ENCODE measurements at regions of chr6 and their contacts with region 1.

Region 1: DNA sequence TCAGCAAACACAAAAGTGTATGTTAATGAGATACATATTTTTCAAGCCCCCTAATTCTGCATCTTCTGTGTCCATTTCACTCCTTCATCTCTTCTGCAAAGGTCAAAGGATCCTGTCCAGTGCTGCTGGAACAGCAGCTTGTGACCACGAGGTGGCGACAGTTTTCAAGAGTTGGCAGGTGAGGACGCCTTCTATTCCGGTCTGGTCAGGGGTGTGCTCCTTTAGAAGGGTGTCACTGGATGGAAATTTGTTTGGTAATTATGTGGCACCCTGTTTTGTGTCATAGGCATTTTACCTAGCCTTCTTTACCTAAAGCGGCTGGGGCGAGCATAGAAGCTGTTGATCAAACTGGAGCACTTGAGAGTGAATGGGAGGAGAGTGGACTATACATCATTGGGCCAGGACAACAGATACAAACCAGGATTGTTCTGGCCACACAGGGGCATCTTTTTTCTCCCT is 32.9 kb upstream of the ERVFRD-1 start:
- DNase-seq: peak; percentile 59 to 82
- H3K4me3 ChIP-seq: no peak overlapping the region
- H3K27ac ChIP-seq: no peak overlapping the region
- H3K4me1 ChIP-seq: no peaks in the 10 kb centered on the region
- H3K27me3 ChIP-seq: no peaks in the 10 kb centered on the region
- CTCF ChIP-seq: peak; percentile 84

Region 2: DNA sequence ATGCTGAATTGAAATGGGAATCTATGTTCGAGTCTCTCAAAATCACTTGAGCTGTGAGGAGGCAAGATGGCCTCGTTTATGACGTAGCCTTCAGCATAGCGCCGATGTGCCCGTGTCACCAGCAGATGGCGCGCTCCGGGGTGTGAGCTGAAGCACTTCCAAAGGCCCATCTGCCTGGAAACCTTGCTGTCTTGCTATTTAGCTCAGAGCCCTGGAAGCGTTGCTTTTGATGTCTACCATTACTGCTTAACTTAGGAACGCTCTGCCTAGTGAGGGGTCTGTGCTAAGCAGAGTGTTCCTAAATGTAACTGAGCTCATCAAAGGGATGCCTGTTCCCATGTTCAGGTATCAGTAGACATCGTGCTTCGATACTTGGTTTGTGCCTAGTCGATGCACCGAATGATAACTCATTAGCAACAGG is 189.8 kb before region 1 on chr6:
- CTCF ChIA-PET with region 1: no interaction called
- POLR2A ChIA-PET with region 1: no interaction called
- intact Hi-C with region 1: loop called (anchors 5 kb)
- DNase-seq: peak in 1 of 2 experiments; percentile 57
- H3K4me3 ChIP-seq: no peak overlapping the region
- H3K27ac ChIP-seq: no peak overlapping the region
- H3K4me1 ChIP-seq: no peaks in the 10 kb centered on the region
- H3K27me3 ChIP-seq: no peaks in the 10 kb centered on the region
- CTCF ChIP-seq: peak; percentile 46

Region 3: DNA sequence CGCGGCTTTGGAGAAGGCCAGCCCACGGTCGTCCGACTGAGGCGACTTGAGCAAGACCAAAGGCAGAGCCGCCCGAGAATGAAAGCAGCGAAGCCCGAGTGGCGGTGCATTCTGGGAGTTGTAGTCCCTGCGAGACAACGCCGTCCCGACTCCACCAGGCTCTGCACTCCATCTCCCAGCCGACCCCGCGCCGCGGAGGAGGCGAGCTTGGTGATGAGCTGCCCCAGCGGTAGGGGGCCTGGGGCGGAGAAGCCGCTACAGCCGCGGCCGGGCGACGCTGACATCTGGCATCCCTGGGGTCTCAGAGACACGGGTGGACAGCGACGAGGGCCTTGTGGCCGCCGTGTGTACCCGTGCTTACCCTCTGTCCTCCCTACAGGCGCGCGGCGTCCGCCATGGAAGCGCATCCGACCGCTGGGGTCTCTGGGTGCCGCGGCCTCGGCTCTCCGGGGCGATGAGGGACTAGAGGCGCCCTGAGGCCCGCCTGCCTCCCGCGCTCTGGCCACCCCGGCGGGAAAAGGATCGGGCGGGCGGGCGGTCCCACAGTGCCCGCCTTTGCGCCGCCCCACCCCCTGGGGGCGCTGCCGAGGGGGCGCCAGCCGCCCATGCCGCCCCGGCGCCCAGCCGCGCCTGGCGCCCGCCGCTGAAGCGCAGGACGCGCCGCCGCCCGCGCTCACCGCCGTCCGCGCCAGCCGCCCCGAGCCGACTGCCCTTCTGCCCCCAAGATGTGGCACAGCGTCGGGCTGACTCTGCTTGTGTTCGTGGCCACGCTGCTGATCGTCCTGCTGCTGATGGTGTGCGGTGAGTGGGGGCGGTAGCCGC is 50.6 kb before region 1 on chr6 and contains the start of gene SMIM13:
- CTCF ChIA-PET with region 1: interaction called, 3 read pairs
- POLR2A ChIA-PET with region 1: no interaction called
- intact Hi-C with region 1: loop called (anchors 1 kb)
- DNase-seq: peak; percentile 88 to 96
- H3K4me3 ChIP-seq: peak within 1 kb of the TSS; percentile 76
- H3K27ac ChIP-seq: peak within 1 kb of the TSS; percentile 64
- H3K4me1 ChIP-seq: 0 out of 2 replicates have a peak, but pooled peaks cover 8% of the 10 kb centered on the region
- H3K27me3 ChIP-seq: no peaks in the 10 kb centered on the region
- CTCF ChIP-seq: peak; percentile 56
- total RNA-seq, gene SMIM13: 16.7 and 22.2 TPM in 2 replicates

Region 4: DNA sequence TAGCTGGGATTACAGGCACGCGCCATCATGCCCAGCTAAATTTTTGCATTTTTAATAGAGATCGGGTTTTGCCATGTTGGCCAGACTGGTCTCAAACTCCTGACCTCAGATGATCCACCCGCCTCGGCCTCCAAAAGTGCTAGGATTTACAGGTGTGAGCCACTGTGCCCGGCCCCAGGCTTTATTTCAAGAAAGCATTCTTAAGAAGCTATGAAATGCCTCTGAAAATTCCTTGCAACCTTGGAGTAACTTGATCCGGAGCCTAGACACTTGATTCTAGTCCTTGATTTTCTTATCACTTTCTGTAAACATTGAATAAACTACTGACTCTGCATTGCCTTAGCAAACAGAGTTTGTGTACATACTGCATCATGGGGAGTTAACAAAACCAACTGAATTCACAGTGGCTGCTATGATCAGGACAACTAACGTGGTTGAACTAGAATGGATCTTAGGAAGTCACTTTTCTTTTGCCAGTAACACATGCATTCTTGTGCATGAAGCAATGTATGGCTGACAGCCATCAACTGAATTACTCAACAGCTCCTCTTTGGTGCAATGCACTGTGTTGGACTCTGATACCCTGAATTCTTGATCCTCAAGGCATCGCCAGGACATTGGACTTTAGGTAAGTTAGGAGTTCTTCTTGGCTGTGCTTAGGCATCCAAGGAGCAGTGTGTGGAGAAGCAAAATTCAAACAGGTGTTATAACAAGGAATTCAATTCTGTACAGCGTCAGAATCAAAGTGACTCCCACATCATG is 290.3 kb after region 1 on chr6:
- CTCF ChIA-PET with region 1: no interaction called
- POLR2A ChIA-PET with region 1: no interaction called
- intact Hi-C with region 1: loop called (anchors 2 kb)
- DNase-seq: peak; percentile 79 to 98
- H3K4me3 ChIP-seq: no peak overlapping the region
- H3K27ac ChIP-seq: peak overlapping the region; percentile 87
- H3K4me1 ChIP-seq: peaks cover 52% of the 10 kb centered on the region
- H3K27me3 ChIP-seq: no peaks in the 10 kb centered on the region
- CTCF ChIP-seq: no peak

Region 5: DNA sequence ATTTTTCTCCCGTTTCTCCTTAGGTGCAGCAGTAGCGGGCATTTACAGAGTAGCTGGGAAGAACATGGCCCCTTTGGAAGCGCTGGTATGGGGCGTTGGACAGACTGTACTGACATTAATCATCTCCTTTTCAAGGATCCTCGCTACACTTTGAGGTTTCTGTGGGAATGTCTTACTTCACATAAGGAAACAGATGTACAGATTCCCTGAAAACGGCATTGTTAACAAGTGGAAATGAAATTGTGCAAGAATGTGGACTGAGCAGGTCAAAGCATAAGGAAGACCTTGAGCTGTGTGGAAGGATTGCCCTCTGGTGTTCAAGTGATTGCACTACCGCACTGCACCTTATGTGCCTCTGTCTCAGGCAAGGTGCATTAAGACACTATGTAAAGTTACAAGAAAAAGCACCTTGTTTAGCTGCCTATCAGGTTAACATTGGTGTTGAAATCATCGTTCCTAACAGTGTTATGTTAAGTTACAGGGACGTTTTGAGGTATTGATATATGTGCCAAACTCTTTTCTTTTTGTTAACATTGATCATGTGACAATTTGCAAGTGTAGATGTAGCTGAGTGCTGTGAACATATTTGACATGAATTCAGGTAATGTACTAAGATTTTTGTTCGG is 431.1 kb after region 1 on chr6:
- CTCF ChIA-PET with region 1: no interaction called
- POLR2A ChIA-PET with region 1: no interaction called
- intact Hi-C with region 1: loop called (anchors 1 kb)
- DNase-seq: peak; percentile 75 to 86
- H3K4me3 ChIP-seq: no peak overlapping the region
- H3K27ac ChIP-seq: no peak overlapping the region
- H3K4me1 ChIP-seq: peaks cover 3% of the 10 kb centered on the region
- H3K27me3 ChIP-seq: no peaks in the 10 kb centered on the region
- CTCF ChIP-seq: peak; percentile 99